BJ (cell line): ENCODE measurements at regions of chr15 and their contacts with region 1.

Region 1: DNA sequence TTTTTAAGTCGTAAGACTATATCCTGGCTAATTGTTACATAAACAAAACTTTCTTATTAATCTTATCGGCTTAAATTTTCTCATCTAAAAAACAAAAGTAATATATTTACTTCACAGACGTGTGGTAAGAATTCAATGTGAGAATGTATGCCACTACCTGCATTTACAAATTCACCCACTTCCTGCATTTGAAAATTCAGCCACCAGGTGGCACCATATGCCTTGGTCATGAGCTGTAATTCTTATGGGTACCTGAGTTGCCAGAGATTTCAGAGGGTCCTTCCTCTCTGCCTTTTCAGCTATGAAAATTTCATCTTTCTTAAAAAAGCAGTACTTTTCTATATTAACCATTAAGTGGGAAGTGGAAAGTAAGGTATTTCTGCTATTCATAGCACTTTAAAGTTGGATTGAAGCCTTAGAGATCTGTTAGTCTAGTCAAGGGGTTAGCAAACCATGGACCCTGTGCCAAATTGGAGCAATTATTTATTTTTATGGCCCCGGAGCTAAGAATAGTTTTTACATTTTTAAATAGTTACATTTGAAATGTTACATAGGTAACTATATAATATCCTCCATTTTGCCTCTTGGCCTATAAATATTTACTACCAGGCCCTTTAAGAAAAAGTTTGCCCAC is 127.8 kb downstream of the HCN4 start:
- DNase-seq: no peak
- H3K4me3 ChIP-seq: no peak overlapping the region
- H3K27me3 ChIP-seq: no peaks in the 10 kb centered on the region
- CTCF ChIP-seq: peak; percentile 84

Region 2: GRCh38 chr15:73114064-73114463 is 126.9 kb before region 1 on chr15:
- CTCF ChIA-PET with region 1: no interaction called
- POLR2A ChIA-PET with region 1: no interaction called
- DNase-seq: no peak
- H3K4me3 ChIP-seq: no peak overlapping the region
- H3K27me3 ChIP-seq: no peaks in the 10 kb centered on the region
- CTCF ChIP-seq: no peak

Region 3: DNA sequence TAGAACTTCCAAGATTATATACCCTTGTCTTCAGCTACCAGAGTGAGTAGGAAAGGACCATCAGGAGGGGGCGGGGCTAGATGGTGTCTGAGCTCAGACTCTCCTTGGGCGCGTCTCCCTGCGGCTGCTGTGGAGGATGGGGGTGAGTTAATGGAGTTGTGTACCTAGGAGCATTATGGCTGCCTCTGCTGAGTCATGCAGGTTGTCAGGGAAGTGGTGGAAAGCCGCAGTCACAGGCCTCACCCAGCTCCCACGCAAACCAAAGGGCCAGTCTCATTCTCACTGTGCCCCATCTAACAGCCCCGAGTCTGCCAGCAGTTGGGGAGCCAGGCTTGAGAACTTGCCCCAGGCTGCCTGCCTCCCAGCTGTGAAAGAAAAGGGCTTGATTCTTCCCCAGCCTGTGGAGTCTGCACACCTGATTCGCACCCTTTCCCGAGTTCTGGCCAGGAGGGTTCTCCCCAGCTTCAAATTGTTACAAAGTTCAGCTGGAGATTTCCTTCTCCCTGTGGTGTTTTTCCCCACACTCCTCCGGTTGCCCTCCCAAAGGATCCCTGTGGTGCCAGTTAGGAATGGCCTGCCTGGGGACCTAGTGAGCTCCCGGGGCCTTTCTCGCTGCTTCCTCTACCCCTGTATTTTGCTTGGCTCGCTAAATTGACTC is 15.5 kb before region 1 on chr15:
- CTCF ChIA-PET with region 1: interaction called, 23 read pairs
- POLR2A ChIA-PET with region 1: no interaction called
- DNase-seq: no peak
- H3K4me3 ChIP-seq: no peak overlapping the region
- H3K27me3 ChIP-seq: no peaks in the 10 kb centered on the region
- CTCF ChIP-seq: no peak

Region 4: GRCh38 chr15:73265536-73266153 is 24.7 kb after region 1 on chr15:
- CTCF ChIA-PET with region 1: interaction called, 36 read pairs
- POLR2A ChIA-PET with region 1: no interaction called
- DNase-seq: no peak
- H3K4me3 ChIP-seq: no peak overlapping the region
- H3K27me3 ChIP-seq: no peaks in the 10 kb centered on the region
- CTCF ChIP-seq: peak; percentile 72

Region 5: GRCh38 chr15:73273181-73274002 is 32.4 kb after region 1 on chr15:
- CTCF ChIA-PET with region 1: interaction called, 71 read pairs
- POLR2A ChIA-PET with region 1: no interaction called
- DNase-seq: no peak
- H3K4me3 ChIP-seq: no peak overlapping the region
- H3K27me3 ChIP-seq: no peaks in the 10 kb centered on the region
- CTCF ChIP-seq: peak; percentile 76

Region 6: GRCh38 chr15:73375755-73376305 is 134.8 kb after region 1 on chr15:
- CTCF ChIA-PET with region 1: no interaction called
- POLR2A ChIA-PET with region 1: no interaction called
- DNase-seq: no peak
- H3K4me3 ChIP-seq: no peak overlapping the region
- H3K27me3 ChIP-seq: peaks cover 4% of the 10 kb centered on the region
- CTCF ChIP-seq: no peak